ENCODE measurements at regions of chr16 and their contacts with region 1.

Region 1: DNA sequence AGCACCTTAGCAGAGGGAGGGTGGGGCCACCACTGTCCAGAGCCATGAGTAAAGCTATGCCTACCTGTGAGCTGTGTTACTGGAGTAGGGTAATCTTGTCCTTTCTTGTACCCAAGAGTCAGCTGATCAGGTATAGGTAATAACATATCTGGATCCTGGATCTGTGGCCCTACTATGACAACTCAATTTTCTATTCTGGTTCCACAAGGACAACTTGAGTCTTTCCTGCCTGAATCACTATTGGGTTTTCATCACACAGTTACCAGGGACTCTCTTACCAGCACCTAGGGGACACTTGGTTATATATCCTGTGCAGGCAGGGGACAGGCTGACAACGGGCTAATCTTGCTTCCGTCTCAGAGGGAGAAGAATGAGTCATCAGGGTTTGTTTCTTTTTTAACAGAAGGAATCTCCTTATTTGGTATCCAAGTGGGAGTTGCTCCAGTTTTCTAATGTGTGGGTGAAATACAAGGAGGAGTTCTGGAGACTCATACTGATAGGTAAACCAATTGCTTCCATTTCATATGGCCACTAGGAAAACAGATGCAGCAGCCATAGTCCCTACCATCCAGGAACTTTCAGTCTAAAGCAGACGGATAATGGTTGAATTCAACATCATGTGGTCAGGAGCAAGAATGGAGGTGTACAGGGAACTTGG is 6.8 kb downstream of the ZNF267 start:
- DNase-seq: peak; percentile 34
- CTCF ChIP-seq: no peak

Region 2: GRCh38 chr16:31404353-31405064 is 475.9 kb before region 1 on chr16:
- CTCF ChIA-PET with region 1: no interaction called
- POLR2A ChIA-PET with region 1: no interaction called
- DNase-seq: no peak
- CTCF ChIP-seq: no peak

Region 3: DNA sequence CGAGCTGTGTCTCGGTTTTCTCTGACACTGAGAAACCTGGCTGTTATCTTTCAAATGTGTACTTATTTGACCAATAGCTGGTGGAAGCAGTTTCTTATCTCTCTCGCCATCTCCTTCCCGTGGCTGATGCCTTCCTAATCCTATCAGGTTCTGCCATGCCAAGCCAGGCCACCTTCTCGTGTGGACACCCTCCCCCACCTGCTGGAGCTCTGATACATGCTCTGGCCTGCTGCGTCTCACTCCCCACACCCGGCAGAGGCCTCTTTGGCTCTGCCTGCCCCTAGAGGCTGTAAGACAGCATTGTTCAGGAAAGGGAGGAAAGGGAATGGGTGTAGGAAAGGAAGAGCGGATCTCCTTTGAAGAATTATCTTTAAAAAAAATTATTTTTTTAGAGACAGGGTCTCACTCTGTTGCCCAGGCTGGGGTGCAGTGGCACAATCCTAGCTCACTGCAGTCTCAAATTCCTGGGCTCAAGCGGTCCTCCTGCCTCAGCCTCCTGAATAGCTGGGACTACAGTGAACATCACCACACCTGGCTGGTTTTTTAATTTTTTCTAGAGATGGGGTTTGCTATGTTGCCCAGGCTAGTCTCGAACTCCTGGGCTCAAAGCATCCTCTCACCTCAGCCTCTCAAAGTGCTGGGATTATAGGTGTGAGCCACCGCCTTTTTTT is 428.6 kb before region 1 on chr16:
- CTCF ChIA-PET with region 1: no interaction called
- POLR2A ChIA-PET with region 1: no interaction called
- DNase-seq: no peak
- CTCF ChIP-seq: peak; percentile 13

Region 4: GRCh38 chr16:31695667-31696066 is 184.8 kb before region 1 on chr16:
- CTCF ChIA-PET with region 1: no interaction called
- POLR2A ChIA-PET with region 1: no interaction called
- DNase-seq: peak; percentile 57
- CTCF ChIP-seq: no peak

Region 5: DNA sequence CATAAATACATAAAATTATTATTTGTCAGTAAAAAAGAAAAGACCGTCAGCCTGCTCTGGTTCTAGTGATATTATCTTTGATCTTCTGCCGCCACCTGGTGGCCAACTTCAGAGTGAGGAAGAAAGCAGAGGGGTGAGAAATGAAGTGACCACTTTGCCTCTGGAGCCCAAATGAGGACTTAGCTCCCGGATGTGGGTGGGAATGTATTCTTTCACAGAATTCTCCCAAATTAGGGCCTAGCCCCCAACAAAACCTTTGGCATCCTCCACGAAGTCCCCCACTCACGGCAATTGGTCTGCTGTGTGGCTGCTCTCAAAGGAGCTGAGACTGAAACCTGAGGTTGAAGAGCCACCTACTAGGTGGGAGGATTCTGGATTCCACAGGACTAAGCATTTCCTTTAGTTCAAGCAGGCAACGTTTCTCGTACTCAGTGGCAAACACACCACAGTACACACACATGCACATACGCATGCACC is 11.7 kb before region 1 on chr16:
- CTCF ChIA-PET with region 1: interaction called, 12 read pairs
- POLR2A ChIA-PET with region 1: interaction called, 6 read pairs
- DNase-seq: peak; percentile 61
- CTCF ChIP-seq: peak; percentile 75

Measured in GM10248 (cell line).